ENCODE measurements at regions of chr11 and their contacts with region 1.

Region 1: GRCh38 chr11:92941676-92942571 is 27.5 kb upstream of the MTNR1B start:
- DNase-seq: no peak
- ATAC-seq: peak; percentile 91
- H3K4me3 Mint-ChIP-seq: no peak overlapping the region
- H3K27ac Mint-ChIP-seq: no peak overlapping the region
- H3K4me1 Mint-ChIP-seq: peaks cover 6% of the 10 kb centered on the region
- H3K27me3 Mint-ChIP-seq: no peaks in the 10 kb centered on the region
- CTCF ChIP-seq: peak; percentile 72

Region 2: DNA sequence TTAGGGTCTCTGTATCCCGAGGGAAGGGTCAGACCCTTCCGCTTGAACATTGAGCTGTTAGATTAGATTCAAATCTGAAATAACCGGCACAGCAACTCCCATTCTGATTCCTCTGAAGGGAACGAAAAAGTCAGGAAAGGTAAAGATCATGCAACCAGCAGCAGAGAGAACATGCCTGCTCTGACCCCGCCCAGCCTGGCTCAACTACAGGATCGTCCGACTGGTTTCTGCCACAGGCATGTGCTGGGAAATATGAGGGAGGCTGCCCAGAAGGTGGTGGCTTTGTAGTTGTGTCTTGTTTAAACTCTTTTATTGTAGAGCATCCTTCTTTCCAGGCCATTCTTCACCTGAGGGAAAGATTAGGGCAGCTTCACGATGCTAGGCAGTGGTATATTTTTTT is 22.5 kb after region 1 on chr11:
- CTCF ChIA-PET with region 1: interaction called, 16 read pairs
- POLR2A ChIA-PET with region 1: no interaction called
- DNase-seq: no peak
- ATAC-seq: no peak
- H3K4me3 Mint-ChIP-seq: no peak overlapping the region
- H3K27ac Mint-ChIP-seq: no peak overlapping the region
- H3K4me1 Mint-ChIP-seq: 0 out of 2 replicates have a peak, but pooled peaks cover 2% of the 10 kb centered on the region
- H3K27me3 Mint-ChIP-seq: peaks cover 26% of the 10 kb centered on the region
- CTCF ChIP-seq: no peak

Region 3: DNA sequence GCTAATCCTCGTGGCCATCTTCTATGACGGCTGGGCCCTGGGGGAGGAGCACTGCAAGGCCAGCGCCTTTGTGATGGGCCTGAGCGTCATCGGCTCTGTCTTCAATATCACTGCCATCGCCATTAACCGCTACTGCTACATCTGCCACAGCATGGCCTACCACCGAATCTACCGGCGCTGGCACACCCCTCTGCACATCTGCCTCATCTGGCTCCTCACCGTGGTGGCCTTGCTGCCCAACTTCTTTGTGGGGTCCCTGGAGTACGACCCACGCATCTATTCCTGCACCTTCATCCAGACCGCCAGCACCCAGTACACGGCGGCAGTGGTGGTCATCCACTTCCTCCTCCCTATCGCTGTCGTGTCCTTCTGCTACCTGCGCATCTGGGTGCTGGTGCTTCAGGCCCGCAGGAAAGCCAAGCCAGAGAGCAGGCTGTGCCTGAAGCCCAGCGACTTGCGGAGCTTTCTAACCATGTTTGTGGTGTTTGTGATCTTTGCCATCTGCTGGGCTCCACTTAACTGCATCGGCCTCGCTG is 39.7 kb after region 1 on chr11:
- CTCF ChIA-PET with region 1: no interaction called
- POLR2A ChIA-PET with region 1: no interaction called
- DNase-seq: no peak
- ATAC-seq: no peak
- H3K4me3 Mint-ChIP-seq: no peak overlapping the region
- H3K27ac Mint-ChIP-seq: no peak overlapping the region
- H3K4me1 Mint-ChIP-seq: peaks cover 10% of the 10 kb centered on the region
- H3K27me3 Mint-ChIP-seq: no peaks in the 10 kb centered on the region
- CTCF ChIP-seq: no peak

Region 4: DNA sequence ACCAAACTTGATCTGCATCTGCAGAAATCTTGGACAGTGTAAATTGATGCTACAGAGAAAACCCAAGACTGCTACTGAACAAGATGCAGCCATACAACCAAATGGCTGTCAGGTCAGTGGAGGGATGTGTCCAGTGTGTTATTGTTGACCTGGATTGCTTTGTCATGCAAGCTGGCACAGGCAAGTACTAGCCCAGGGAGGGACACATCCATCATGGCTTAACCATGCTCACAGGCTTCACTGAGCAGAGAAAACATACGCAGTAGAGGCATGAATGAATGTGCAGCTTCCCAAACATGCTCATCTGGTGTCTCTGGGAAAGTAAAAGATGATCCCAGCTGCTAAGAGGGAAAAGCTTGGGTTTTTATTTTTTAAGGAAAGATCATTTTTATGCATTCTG is 121.2 kb after region 1 on chr11:
- CTCF ChIA-PET with region 1: interaction called, 24 read pairs
- POLR2A ChIA-PET with region 1: no interaction called
- DNase-seq: no peak
- ATAC-seq: no peak
- H3K4me3 Mint-ChIP-seq: no peak overlapping the region
- H3K27ac Mint-ChIP-seq: no peak overlapping the region
- H3K4me1 Mint-ChIP-seq: peaks cover 16% of the 10 kb centered on the region
- H3K27me3 Mint-ChIP-seq: no peaks in the 10 kb centered on the region; the same call in 1 of the 2 replicates
- CTCF ChIP-seq: no peak

Region 5: GRCh38 chr11:93128574-93128973 is 186.7 kb after region 1 on chr11:
- CTCF ChIA-PET with region 1: interaction called, 18 read pairs
- POLR2A ChIA-PET with region 1: no interaction called
- DNase-seq: no peak
- ATAC-seq: no peak
- H3K4me3 Mint-ChIP-seq: no peak overlapping the region
- H3K27ac Mint-ChIP-seq: no peak overlapping the region
- H3K4me1 Mint-ChIP-seq: no peaks in the 10 kb centered on the region
- H3K27me3 Mint-ChIP-seq: no peaks in the 10 kb centered on the region
- CTCF ChIP-seq: no peak

Region 6: DNA sequence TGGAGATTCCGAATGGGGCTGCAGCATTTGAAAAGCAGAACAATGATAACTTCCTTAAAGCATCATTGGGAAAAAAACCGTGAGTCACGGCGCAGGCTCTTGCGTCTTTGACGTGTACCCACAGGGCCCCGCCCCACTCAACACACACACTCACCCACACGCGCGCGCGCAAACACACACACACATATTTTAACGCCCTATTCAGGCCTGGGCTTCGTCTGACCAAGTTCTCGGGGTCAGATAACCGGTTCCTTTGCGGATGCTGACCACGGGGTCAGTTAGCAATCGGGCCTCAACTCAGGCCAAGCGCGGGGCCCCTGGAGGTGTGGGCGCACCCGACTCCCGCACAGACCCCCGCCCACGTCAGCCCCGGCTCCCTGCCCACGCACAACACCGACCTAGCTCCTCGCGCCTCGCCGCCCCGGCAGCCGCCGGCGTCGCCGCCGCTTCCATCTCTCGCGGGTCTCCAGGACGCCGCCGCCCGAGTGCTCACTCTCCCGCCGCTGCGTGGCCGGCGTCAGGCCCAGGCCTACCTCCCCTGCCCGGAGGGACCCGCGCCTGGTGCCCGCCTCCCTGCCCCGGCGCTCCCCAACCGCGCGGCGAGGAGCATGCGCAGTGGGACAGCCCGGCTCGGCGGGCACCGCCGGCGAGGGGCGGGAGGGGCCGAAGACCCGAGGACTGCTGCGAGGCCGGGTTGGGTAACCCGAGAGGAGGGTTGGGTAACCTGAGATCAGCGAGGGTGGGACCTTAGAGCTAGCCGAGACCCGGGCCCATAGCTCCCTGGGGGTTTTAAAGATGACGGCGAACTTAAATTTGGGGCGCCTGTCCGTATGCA is 255.7 kb after region 1 on chr11 and contains the start of gene SLC36A4:
- CTCF ChIA-PET with region 1: interaction called, 10 read pairs
- POLR2A ChIA-PET with region 1: no interaction called
- DNase-seq: peak; percentile 93
- ATAC-seq: peak; percentile 99
- H3K4me3 Mint-ChIP-seq: peak within 1 kb of the TSS; percentile 95
- H3K27ac Mint-ChIP-seq: peak within 1 kb of the TSS; percentile 99
- H3K4me1 Mint-ChIP-seq: peaks cover 16% of the 10 kb centered on the region
- H3K27me3 Mint-ChIP-seq: no peaks in the 10 kb centered on the region
- CTCF ChIP-seq: no peak
- total RNA-seq, gene SLC36A4: 20.8 to 27.9 TPM (median 21.0 TPM) in 3 replicates

Measured in WTC11 (cell line).